ENCODE measurements at regions of chr19 and their contacts with region 1.

Region 1: DNA sequence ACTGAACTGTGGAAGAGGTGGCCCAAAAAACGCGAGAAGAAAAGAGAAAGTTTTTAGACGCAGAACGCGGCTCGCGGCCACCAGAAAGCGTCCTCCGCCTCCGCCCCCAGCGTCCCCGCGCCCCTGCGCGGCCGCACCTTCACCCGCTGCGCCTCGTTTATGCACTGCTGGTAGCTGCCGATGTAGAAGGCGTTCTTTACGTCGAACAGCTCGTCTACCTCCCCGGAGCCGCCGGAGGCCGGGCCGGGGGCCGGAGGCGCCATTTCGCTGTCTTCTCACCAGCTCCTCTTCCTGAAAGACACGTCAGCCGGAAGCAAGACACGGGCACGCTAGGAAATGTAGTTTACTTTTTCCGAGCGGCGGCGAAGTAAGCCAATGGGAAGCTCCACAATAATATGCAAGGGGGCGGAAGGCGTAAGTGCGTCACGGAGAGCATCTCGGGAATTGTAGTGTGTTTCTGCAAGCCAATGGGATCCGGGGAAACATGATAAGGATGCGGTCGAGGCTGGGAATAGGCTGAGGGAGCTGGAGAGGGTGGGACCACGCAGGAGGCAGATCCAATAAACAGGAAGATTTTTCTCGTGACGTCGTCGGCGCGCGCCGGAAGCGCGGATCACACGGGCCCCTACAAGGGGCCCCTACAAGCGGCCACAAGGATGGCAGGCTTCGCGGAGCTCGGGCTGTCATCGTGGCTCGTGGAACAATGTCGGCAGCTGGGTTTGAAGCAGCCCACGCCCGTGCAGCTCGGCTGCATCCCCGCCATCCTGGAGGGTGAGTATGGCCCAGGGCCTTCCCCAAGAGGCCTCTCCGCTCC is at the starts of genes COPE and DDX49:
- DNase-seq: peak; percentile 85 to 99 (median 99)
- ATAC-seq: peak; percentile 97
- H3K4me3 ChIP-seq: peak within 1 kb of the TSS; percentile 85
- H3K4me3 Mint-ChIP-seq: peak within 1 kb of the TSS; percentile 71 to 100 (median 92)
- H3K27ac ChIP-seq: peak within 1 kb of the TSS; percentile 93
- H3K27ac Mint-ChIP-seq: peak within 1 kb of the TSS; percentile 76 to 98 (median 96)
- H3K4me1 ChIP-seq: peaks cover 18 to 21% of the 10 kb centered on the region in 2 donors
- H3K4me1 Mint-ChIP-seq: peaks cover 25 to 63% (median 36%) of the 10 kb centered on the region in 7 donors
- H3K27me3 ChIP-seq: no peaks in the 10 kb centered on the region
- H3K27me3 Mint-ChIP-seq: peaks cover 0 to 2% (median 0%) of the 10 kb centered on the region in 5 donors
- total RNA-seq, gene COPE: 124 to 283 (median 163) TPM
- total RNA-seq, gene DDX49: 36.4 to 63.2 (median 50.2) TPM

Region 2: GRCh38 chr19:18542936-18543815 is 376.1 kb before region 1 on chr19 and contains the start of gene FKBP8:
- CTCF ChIA-PET with region 1: no interaction called
- POLR2A ChIA-PET with region 1: interaction called, 4 read pairs
- intact Hi-C with region 1: loop called in 1 of 2 experiments (anchors 1 kb)
- DNase-seq: peak; percentile 84 to 95 (median 91)
- ATAC-seq: peak; percentile 97
- H3K4me3 ChIP-seq: peak within 1 kb of the TSS; percentile 68
- H3K4me3 Mint-ChIP-seq: peak within 1 kb of the TSS; percentile 90 to 99 (median 94)
- H3K27ac ChIP-seq: peak within 1 kb of the TSS; percentile 87
- H3K27ac Mint-ChIP-seq: peak within 1 kb of the TSS; percentile 89 to 100 (median 97)
- H3K4me1 ChIP-seq: peaks cover 15 to 16% of the 10 kb centered on the region in 2 donors
- H3K4me1 Mint-ChIP-seq: peaks cover 14 to 31% (median 26%) of the 10 kb centered on the region in 7 donors
- H3K27me3 ChIP-seq: no peaks in the 10 kb centered on the region
- H3K27me3 Mint-ChIP-seq: no peaks in the 10 kb centered on the region
- total RNA-seq, gene FKBP8: 137 to 241 (median 221) TPM

Region 3: DNA sequence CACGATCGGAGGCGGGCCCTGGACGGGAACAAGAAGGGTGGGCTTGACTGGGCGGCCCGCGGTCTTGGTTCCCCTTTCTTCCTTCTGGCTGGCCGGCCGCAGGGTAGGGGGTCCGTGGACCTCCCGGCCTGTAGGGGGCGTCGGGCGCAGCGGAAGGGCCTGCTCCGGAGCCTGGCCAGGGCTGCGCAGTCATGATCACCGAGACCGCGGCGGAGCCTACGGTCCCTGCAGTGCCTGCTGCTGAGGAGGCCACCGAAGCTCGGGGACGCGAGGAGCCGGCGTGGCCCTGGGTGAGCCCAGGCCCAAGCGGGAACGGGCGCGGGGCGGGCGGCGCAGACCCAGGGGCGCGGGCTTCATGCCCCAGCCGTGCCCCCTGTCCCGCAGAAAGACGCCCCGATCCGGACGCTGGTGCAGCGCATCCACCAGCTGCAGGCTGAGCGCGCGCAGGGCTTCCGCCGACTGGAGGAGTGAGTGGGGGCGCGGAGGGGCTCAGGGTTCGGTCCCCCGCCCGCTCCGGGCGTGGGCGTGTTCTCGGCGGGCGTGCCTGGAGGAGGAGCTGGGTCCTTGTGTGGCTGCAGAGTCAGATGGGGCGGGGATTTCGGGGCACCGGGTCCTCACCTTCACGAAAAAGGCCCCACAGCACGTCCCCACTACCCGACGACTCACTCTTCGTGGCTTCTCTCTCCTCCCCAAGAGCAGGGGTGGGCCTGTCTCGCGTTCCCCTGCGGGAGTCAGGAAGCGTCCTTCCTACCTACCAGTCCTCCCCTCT is 330.5 kb before region 1 on chr19 and contains the start of gene REX1BD:
- CTCF ChIA-PET with region 1: no interaction called
- POLR2A ChIA-PET with region 1: interaction called, 10 read pairs
- intact Hi-C with region 1: loop called (anchors 1 to 2 kb)
- DNase-seq: peak; percentile 77 to 92 (median 89)
- ATAC-seq: peak; percentile 89
- H3K4me3 ChIP-seq: peak within 1 kb of the TSS; percentile 72
- H3K4me3 Mint-ChIP-seq: peak within 1 kb of the TSS; percentile 80 to 95 (median 92)
- H3K27ac ChIP-seq: peak within 1 kb of the TSS; percentile 88
- H3K27ac Mint-ChIP-seq: peak within 1 kb of the TSS; percentile 89 to 96 (median 93)
- H3K4me1 ChIP-seq: peaks cover 18 to 33% of the 10 kb centered on the region in 2 donors
- H3K4me1 Mint-ChIP-seq: peaks cover 20 to 56% (median 42%) of the 10 kb centered on the region in 7 donors
- H3K27me3 ChIP-seq: no peaks in the 10 kb centered on the region
- H3K27me3 Mint-ChIP-seq: peaks cover 0 to 3% (median 0%) of the 10 kb centered on the region in 5 donors
- total RNA-seq, gene REX1BD: 83.9 to 152 (median 116) TPM

Region 4: DNA sequence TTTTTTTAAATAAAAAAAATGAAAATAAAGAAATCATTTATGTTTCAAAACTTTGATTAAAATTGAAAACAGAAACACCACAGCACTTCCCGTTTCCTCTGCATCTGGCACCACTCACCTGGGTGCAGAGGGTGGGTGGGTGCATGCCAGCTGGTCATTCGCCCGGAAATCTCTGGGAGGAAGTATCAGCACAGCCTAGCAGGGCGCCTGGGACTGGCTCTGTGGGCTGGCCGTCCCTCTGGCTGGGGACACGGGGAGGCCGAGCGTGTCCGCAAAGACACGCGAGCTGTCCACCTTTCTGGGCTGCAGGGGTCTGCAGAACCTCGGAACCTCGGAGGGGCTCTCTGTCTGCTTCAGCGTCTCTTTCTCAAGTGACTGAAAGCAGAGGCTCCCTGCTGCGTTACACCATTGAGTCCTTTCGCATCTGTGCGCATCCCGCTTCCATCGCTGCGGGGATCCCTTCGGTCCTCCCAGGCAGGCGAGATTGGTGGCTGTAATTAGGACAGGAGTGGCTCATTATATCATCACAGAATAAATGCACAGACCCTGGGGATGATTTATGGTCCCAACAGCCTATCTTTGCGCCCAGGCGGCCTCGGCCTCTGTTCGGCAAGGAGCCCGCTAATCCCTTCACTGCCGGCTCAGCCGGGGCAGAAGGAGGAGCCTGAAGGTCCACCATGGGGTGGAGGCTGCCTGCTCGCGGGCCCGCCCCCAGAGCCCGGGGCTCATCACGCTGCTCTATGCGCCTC is 218.6 kb before region 1 on chr19:
- CTCF ChIA-PET with region 1: no interaction called
- POLR2A ChIA-PET with region 1: interaction called, 6 read pairs
- intact Hi-C with region 1: loop called in 1 of 2 experiments (anchors 1 kb)
- DNase-seq: peak; percentile 50 to 76 (median 68)
- ATAC-seq: peak; percentile 97
- H3K4me3 ChIP-seq: peak overlapping the region; percentile 71
- H3K4me3 Mint-ChIP-seq: peak overlapping the region; percentile 84 to 95 (median 91)
- H3K27ac ChIP-seq: peak overlapping the region; percentile 76
- H3K27ac Mint-ChIP-seq: peak overlapping the region; percentile 39 to 98 (median 94)
- H3K4me1 ChIP-seq: peaks cover 24 to 38% of the 10 kb centered on the region in 2 donors
- H3K4me1 Mint-ChIP-seq: peaks cover 15 to 52% (median 36%) of the 10 kb centered on the region in 7 donors
- H3K27me3 ChIP-seq: no peaks in the 10 kb centered on the region
- H3K27me3 Mint-ChIP-seq: peaks cover 0 to 4% (median 0%) of the 10 kb centered on the region in 5 donors

Region 5: DNA sequence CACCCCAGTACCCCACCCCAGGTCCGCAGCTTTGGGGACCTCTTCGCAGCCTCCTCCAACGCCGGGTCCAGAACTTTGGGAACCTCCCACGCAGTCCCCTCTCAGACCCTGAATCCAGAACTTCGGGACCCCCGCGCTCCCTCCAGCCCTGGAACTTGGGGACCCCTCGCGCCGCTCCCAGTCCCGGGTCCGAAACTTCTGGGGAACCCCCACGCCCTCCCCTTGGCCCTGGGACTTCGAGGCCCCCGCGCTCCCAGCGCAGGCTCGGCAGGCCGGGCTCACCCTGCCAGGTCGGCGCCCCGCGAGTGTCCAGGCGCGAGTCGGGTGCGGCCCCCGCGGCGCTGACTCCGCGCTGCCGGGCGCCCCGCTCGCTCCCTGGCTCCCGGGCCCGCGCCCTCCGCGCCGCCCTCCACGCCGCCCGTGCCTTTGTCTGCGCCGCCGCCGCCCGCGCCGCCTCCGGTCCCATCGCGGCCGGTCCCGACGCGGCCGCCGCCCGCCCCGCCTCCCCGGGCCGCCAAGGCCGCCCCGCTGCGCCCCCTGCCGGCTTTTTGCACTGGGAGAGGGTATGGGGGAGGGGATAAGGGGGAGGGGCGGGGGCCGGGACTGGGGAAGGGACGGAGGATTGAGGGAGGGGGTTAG is 21.6 kb after region 1 on chr19 and contains the start of gene HOMER3:
- CTCF ChIA-PET with region 1: no interaction called
- POLR2A ChIA-PET with region 1: no interaction called
- intact Hi-C with region 1: loop called (anchors 1 kb)
- DNase-seq: peak; percentile 46 to 90 (median 65)
- ATAC-seq: peak; percentile 95
- H3K4me3 ChIP-seq: peak within 1 kb of the TSS; percentile 33
- H3K4me3 Mint-ChIP-seq: peak within 1 kb of the TSS; percentile 42 to 81 (median 60)
- H3K27ac ChIP-seq: no peak within 1 kb of the TSS
- H3K27ac Mint-ChIP-seq: peak within 1 kb of the TSS in 3 of 9 donors; percentile 20 to 65 (median 28)
- H3K4me1 ChIP-seq: no peaks in the 10 kb centered on the region
- H3K4me1 Mint-ChIP-seq: peaks cover 0 to 18% (median 12%) of the 10 kb centered on the region in 7 donors
- H3K27me3 ChIP-seq: no peaks in the 10 kb centered on the region
- H3K27me3 Mint-ChIP-seq: peaks cover 11 to 50% (median 30%) of the 10 kb centered on the region in 5 donors
- total RNA-seq, gene HOMER3: 0.53 to 16.3 (median 1.4) TPM in 4 of 5 experiments, not detected in the other

Region 6: GRCh38 chr19:19105365-19106055 is 186.2 kb after region 1 on chr19:
- CTCF ChIA-PET with region 1: no interaction called
- POLR2A ChIA-PET with region 1: no interaction called
- intact Hi-C with region 1: no loop called
- DNase-seq: no peak
- ATAC-seq: no peak
- H3K4me3 ChIP-seq: no peak overlapping the region
- H3K4me3 Mint-ChIP-seq: no peak overlapping the region
- H3K27ac ChIP-seq: no peak overlapping the region
- H3K27ac Mint-ChIP-seq: no peak overlapping the region
- H3K4me1 ChIP-seq: no peaks in the 10 kb centered on the region
- H3K4me1 Mint-ChIP-seq: peaks cover 0 to 8% (median 4%) of the 10 kb centered on the region in 7 donors
- H3K27me3 ChIP-seq: no peaks in the 10 kb centered on the region
- H3K27me3 Mint-ChIP-seq: peaks cover 0 to 2% (median 0%) of the 10 kb centered on the region in 5 donors

Region 7: DNA sequence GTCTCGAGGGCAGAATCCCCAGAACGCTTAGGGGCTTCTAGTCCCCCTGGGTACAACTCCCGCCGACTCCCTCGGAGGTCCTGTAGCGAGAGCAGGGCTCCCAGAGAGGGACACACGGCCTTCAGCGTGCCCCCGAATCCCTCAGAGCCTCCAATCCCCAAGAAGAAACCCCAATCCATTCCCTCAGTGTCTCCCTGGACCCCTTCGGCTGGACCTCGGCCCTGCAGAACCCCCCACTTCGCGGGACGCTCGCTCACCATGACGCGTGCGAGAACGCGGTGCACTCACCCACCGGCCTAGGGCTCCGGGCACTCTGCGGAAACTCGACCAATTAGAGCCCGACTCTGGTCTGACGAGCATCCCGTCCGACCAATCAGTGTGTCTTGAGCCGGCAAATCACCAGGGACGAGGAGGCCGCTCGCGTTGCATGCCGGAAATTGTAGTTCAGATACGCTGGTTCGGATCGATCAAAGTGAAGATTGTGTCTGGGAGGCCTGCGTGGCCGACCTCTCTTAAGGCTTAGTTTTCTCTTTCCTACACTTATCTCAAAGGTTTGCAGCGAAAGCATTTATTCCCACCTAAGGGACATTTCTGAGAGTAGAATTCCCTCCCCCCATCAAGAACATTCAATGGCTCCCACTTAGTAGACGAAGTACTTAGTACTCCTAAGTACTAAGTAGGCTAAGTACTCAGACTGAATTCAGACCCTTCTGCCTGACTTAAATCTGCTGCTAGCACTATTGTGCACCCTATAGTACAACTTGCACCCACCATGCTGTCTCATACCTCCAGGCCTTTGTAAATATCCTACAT is 219.1 kb after region 1 on chr19 and contains the start of gene TMEM161A:
- CTCF ChIA-PET with region 1: no interaction called
- POLR2A ChIA-PET with region 1: no interaction called
- intact Hi-C with region 1: loop called in 1 of 2 experiments (anchors 1 kb)
- DNase-seq: peak; percentile 84 to 96 (median 93)
- ATAC-seq: peak; percentile 100
- H3K4me3 ChIP-seq: peak within 1 kb of the TSS; percentile 84
- H3K4me3 Mint-ChIP-seq: peak within 1 kb of the TSS; percentile 83 to 100 (median 98)
- H3K27ac ChIP-seq: peak within 1 kb of the TSS; percentile 90
- H3K27ac Mint-ChIP-seq: peak within 1 kb of the TSS; percentile 84 to 97 (median 94)
- H3K4me1 ChIP-seq: peaks cover 8 to 9% of the 10 kb centered on the region in 2 donors
- H3K4me1 Mint-ChIP-seq: peaks cover 20 to 41% (median 29%) of the 10 kb centered on the region in 7 donors
- H3K27me3 ChIP-seq: no peaks in the 10 kb centered on the region
- H3K27me3 Mint-ChIP-seq: no peaks in the 10 kb centered on the region
- total RNA-seq, gene TMEM161A: 15.8 to 32.7 (median 23.5) TPM

Measured in naive thymus-derived CD4-positive, alpha-beta T cell (primary cell).